Caco-2 (cell line): ENCODE measurements at regions of chr5 and their contacts with region 1.

Region 1: GRCh38 chr5:180605554-180606214 is 14.4 kb upstream of the SCGB3A1 start:
- DNase-seq: peak in 1 of 2 experiments; percentile 49
- H3K4me3 ChIP-seq: no peak overlapping the region
- H3K4me3 Mint-ChIP-seq: no peak overlapping the region
- H3K27ac Mint-ChIP-seq: no peak overlapping the region
- H3K4me1 ChIP-seq: peaks cover 8% of the 10 kb centered on the region; the same call in 1 of the 2 replicates
- H3K4me1 Mint-ChIP-seq: no peaks in the 10 kb centered on the region
- H3K27me3 ChIP-seq: no peaks in the 10 kb centered on the region
- H3K27me3 Mint-ChIP-seq: no peaks in the 10 kb centered on the region
- CTCF ChIP-seq: peak; percentile 69 to 74

Region 2: DNA sequence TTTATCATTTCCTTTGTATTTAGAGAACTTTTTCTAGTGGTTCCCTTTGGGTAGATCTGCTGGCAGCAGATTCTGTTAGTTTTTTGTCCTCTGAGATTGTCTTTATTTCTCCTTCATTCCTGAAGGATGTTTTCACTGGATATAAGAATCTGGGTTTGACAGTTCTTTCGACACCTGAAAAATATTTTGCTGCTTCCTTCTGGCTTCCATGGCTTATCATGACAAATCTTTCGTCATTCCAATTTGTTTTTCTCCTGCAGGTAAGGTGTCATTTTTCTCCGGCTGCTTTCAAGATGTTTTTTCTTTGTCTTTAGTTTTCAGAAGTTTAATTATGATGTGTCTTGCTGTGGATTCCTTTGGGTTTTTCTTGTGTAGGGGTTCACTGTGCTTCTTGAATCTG is 45.3 kb before region 1 on chr5:
- CTCF ChIA-PET with region 1: no interaction called
- POLR2A ChIA-PET with region 1: no interaction called
- intact Hi-C with region 1: loop called (anchors 2 kb)
- DNase-seq: no peak
- H3K4me3 ChIP-seq: no peak overlapping the region
- H3K4me3 Mint-ChIP-seq: no peak overlapping the region
- H3K27ac Mint-ChIP-seq: peak overlapping the region; percentile 45
- H3K4me1 ChIP-seq: no peaks in the 10 kb centered on the region
- H3K4me1 Mint-ChIP-seq: no peaks in the 10 kb centered on the region
- H3K27me3 ChIP-seq: no peaks in the 10 kb centered on the region
- H3K27me3 Mint-ChIP-seq: no peaks in the 10 kb centered on the region
- CTCF ChIP-seq: no peak